IMR-90 (cell line): ENCODE measurements at regions of chr17 and their contacts with region 1.

Region 1: GRCh38 chr17:37527249-37527851 is 37.7 kb downstream of the DUSP14 start:
- DNase-seq: peak; percentile 70
- ATAC-seq: peak; percentile 85
- H3K4me3 ChIP-seq: no peak overlapping the region
- H3K27ac ChIP-seq: no peak overlapping the region
- H3K4me1 ChIP-seq: peaks cover 7% of the 10 kb centered on the region
- H3K27me3 ChIP-seq: no peaks in the 10 kb centered on the region
- CTCF ChIP-seq: peak; percentile 72
- POLR2A ChIP-seq: no peak
- RAD21 ChIP-seq: peak; percentile 79

Region 2: GRCh38 chr17:37576281-37576680 is 48.9 kb after region 1 on chr17:
- CTCF ChIA-PET with region 1: no interaction called
- POLR2A ChIA-PET with region 1: no interaction called
- dilution Hi-C with region 1: no loop called
- in situ Hi-C with region 1: no loop called
- intact Hi-C with region 1: loop called (anchors 5 kb)
- DNase-seq: peak; percentile 27
- ATAC-seq: no peak
- H3K4me3 ChIP-seq: no peak overlapping the region
- H3K27ac ChIP-seq: no peak overlapping the region
- H3K4me1 ChIP-seq: no peaks in the 10 kb centered on the region
- H3K27me3 ChIP-seq: no peaks in the 10 kb centered on the region
- CTCF ChIP-seq: no peak
- POLR2A ChIP-seq: no peak
- RAD21 ChIP-seq: no peak

Region 3: DNA sequence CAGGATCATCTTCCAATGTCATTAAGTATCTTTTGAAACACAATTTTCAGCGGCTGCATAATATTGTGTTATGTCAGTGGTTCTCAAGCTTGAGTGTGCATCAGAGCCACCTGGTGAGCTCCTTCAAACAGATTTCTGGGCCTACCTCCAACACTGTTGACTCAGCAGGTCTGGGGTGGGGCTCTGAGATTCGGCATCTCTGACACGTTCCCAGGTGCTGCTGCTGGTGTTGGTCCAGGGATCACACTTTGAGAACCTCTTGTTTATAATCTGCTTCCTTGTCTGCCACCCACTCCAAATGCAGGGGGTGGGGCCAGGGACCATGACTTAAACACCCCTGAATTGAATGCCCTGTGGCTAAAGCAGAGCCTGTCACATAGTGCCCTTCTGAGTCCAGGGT is 291.3 kb after region 1 on chr17:
- CTCF ChIA-PET with region 1: no interaction called
- POLR2A ChIA-PET with region 1: no interaction called
- dilution Hi-C with region 1: no loop called
- in situ Hi-C with region 1: no loop called
- intact Hi-C with region 1: loop called (anchors 1 kb)
- DNase-seq: peak; percentile 89
- ATAC-seq: no peak
- H3K4me3 ChIP-seq: no peak overlapping the region
- H3K27ac ChIP-seq: no peak overlapping the region
- H3K4me1 ChIP-seq: peaks cover 4% of the 10 kb centered on the region
- H3K27me3 ChIP-seq: no peaks in the 10 kb centered on the region
- CTCF ChIP-seq: no peak
- POLR2A ChIP-seq: no peak
- RAD21 ChIP-seq: no peak

Region 4: GRCh38 chr17:37884516-37884915 is 357.2 kb after region 1 on chr17:
- CTCF ChIA-PET with region 1: no interaction called
- POLR2A ChIA-PET with region 1: no interaction called
- dilution Hi-C with region 1: no loop called
- in situ Hi-C with region 1: no loop called
- intact Hi-C with region 1: no loop called
- DNase-seq: no peak
- ATAC-seq: no peak
- H3K4me3 ChIP-seq: no peak overlapping the region
- H3K27ac ChIP-seq: no peak overlapping the region
- H3K4me1 ChIP-seq: no peaks in the 10 kb centered on the region
- H3K27me3 ChIP-seq: no peaks in the 10 kb centered on the region; the same call in 1 of the 2 replicates
- CTCF ChIP-seq: no peak
- POLR2A ChIP-seq: no peak
- RAD21 ChIP-seq: no peak